ENCODE measurements at regions of chr6 and their contacts with region 1.

Region 1: GRCh38 chr6:139369568-139370282 is 4.7 kb downstream of the CITED2 start:
- DNase-seq: no peak
- H3K4me3 ChIP-seq: peak overlapping the region in 1 of 4 experiments; percentile 96; a peak in 4 of 8 replicates
- H3K27ac ChIP-seq: no peak overlapping the region
- H3K4me1 ChIP-seq: peaks cover 2 to 33% (median 22%) of the 10 kb centered on the region in 4 experiments; a peak in 5 of 7 replicates
- H3K27me3 ChIP-seq: no peaks in the 10 kb centered on the region
- CTCF ChIP-seq: peak in 2 of 3 experiments; percentile 41 to 43; a peak in 2 of 4 replicates
- EP300 ChIP-seq: no peak
- POLR2A ChIP-seq: no peak
- RAD21 ChIP-seq: peak; percentile 80 to 82

Region 2: DNA sequence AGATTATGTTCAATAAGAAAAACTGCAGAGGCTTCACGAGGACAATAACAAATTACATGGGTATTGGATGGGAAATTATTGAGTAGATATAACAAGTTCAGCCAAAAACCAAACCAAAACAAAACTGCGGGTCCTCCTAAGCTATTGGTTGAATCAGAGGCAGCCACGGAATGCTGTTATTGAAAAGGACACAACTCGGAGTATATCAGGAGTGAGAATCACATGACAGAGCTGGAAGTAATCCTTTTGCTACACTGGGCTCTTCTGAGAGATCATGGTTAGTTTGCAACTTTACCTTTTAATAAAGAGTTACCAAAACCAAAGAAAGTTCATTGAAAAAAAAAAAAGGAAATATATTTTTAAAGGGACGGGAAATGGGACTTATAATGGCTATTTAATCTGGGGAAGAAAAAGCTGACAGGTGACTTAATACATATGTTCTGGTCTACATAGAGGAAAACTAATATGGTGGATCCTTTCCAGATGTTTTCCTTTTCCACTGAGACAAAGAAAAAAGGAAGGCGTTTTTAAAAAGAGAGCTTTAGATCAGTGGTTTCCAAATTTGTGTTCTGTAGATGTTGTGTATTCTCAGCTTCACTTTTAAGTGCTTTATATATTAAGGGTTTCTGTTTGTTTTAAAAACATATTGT is 11.6 kb after region 1 on chr6:
- CTCF ChIA-PET with region 1: interaction called, 11 read pairs
- POLR2A ChIA-PET with region 1: interaction called, 24 read pairs
- DNase-seq: no peak
- H3K4me3 ChIP-seq: no peak overlapping the region
- H3K27ac ChIP-seq: no peak overlapping the region
- H3K4me1 ChIP-seq: peaks cover 4 to 9% (median 8%) of the 10 kb centered on the region in 4 experiments; a peak in 6 of 7 replicates
- H3K27me3 ChIP-seq: 0 out of 7 replicates have a peak, but pooled peaks cover 0 to 3% (median 0%) of the 10 kb centered on the region in 4 experiments
- CTCF ChIP-seq: no peak
- EP300 ChIP-seq: no peak
- POLR2A ChIP-seq: no peak
- RAD21 ChIP-seq: no peak

Region 3: GRCh38 chr6:139888681-139889122 is 519.0 kb after region 1 on chr6:
- CTCF ChIA-PET with region 1: interaction called, 13 read pairs
- POLR2A ChIA-PET with region 1: interaction called, 30 read pairs
- DNase-seq: peak; percentile 56 to 71
- H3K4me3 ChIP-seq: peak overlapping the region in 1 of 4 experiments; percentile 23; a peak in 1 of 8 replicates
- H3K27ac ChIP-seq: peak overlapping the region; percentile 78
- H3K4me1 ChIP-seq: peaks cover 2 to 39% (median 12%) of the 10 kb centered on the region in 4 experiments; a peak in 4 of 7 replicates
- H3K27me3 ChIP-seq: no peaks in the 10 kb centered on the region
- CTCF ChIP-seq: no peak
- EP300 ChIP-seq: peak in 1 of 2 experiments; percentile 86; a peak in 2 of 3 replicates
- POLR2A ChIP-seq: no peak
- RAD21 ChIP-seq: peak in 1 of 2 experiments; percentile 18; a peak in 2 of 4 replicates